ENCODE measurements at regions of chr12 and their contacts with region 1.

Region 1: DNA sequence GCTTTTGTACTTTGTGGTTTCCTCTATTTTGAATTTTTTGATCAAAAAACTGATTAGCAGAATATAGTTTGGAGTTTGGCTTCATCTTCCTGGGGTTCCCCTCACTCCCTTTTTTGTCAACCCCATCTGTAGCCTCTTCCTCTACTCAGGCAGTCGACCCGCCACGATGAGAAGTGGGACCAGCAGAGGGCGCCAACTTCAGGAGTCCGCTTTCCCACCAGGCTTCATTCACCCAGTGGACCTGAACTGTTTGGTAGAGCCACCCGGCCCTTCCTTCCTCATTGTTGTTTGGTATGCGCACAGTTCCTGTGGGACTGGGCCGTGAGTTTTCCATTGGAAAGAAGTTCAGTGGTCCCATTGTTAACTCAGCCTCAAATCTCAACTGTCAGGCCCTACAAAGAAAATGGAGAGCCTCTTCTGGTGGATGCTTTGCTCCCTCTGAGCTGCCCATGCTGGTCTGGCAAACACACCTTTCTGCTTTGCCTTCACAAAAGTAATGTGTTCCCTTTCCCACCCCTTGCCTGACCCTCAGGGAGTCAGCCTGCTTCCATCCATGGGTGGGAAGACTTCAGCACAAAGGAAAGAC is 21.7 kb downstream of the TMBIM6 start:
- DNase-seq: peak; percentile 89
- ATAC-seq: peak; percentile 56
- H3K4me3 Mint-ChIP-seq: peak overlapping the region; percentile 18
- H3K27ac Mint-ChIP-seq: peak overlapping the region; percentile 86
- H3K4me1 Mint-ChIP-seq: peaks cover 68% of the 10 kb centered on the region
- H3K27me3 Mint-ChIP-seq: no peaks in the 10 kb centered on the region
- CTCF ChIP-seq: peak; percentile 85

Region 2: GRCh38 chr12:49740930-49741881 is 21.9 kb before region 1 on chr12 and contains the start of gene TMBIM6:
- CTCF ChIA-PET with region 1: interaction called, 104 read pairs
- POLR2A ChIA-PET with region 1: interaction called, 74 read pairs
- intact Hi-C with region 1: loop called (anchors 2 kb)
- DNase-seq: peak; percentile 100
- ATAC-seq: peak; percentile 91
- H3K4me3 Mint-ChIP-seq: peak within 1 kb of the TSS; percentile 99
- H3K27ac Mint-ChIP-seq: peak within 1 kb of the TSS; percentile 95
- H3K4me1 Mint-ChIP-seq: peaks cover 31% of the 10 kb centered on the region
- H3K27me3 Mint-ChIP-seq: no peaks in the 10 kb centered on the region
- CTCF ChIP-seq: peak; percentile 95
- total RNA-seq, gene TMBIM6: 437 to 443 TPM

Region 3: DNA sequence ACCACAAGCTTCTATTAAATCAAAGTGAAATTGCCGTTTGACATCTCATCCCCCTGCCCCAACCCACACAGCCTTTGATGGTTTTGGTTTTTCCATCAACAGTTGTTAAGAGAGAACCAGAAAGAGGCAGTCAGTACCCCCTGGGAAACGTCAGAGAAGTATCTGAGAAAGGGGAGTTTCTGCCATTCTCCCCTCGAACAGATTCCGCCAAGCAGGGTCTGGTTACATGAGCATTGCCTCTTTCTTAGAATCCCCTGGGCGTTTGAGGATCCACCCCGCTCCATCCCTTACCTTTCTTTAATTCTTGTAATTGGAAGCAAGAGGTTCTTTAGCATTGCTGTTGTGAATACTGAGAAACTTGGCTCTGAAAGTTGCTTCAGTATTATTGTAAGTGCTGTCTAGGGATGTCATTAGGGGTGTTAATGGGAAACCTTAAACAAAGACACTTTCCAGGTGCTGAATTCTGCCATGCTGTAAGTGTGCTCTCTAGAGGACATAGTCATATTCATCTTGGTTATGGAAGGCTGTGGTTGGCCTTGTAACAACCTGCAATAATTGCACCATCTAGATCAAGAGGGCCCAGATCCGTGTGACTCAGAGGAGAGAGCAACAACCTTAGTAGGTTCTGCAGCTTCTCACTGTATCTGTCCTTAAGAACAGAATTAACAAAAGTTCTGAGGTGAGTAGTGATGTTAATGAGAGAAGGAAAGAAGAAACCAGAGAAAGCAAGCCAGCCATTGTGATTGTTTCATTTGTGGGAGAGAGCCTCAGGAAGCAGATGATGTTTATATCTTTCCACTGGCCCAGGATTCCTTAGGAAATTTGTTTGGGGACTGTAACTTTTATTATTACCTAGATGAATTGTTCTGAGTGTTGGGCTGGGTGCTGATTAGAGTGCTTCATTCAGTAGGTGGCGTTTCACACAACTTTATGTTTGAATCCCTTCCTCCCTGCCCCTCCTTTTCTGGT is 12.8 kb before region 1 on chr12:
- CTCF ChIA-PET with region 1: interaction called, 104 read pairs
- POLR2A ChIA-PET with region 1: interaction called, 74 read pairs
- intact Hi-C with region 1: loop called (anchors 2 kb)
- DNase-seq: peak; percentile 85
- ATAC-seq: peak; percentile 84
- H3K4me3 Mint-ChIP-seq: peak overlapping the region; percentile 77
- H3K27ac Mint-ChIP-seq: peak overlapping the region; percentile 96
- H3K4me1 Mint-ChIP-seq: peaks cover 84% of the 10 kb centered on the region
- H3K27me3 Mint-ChIP-seq: no peaks in the 10 kb centered on the region
- CTCF ChIP-seq: no peak

Region 4: DNA sequence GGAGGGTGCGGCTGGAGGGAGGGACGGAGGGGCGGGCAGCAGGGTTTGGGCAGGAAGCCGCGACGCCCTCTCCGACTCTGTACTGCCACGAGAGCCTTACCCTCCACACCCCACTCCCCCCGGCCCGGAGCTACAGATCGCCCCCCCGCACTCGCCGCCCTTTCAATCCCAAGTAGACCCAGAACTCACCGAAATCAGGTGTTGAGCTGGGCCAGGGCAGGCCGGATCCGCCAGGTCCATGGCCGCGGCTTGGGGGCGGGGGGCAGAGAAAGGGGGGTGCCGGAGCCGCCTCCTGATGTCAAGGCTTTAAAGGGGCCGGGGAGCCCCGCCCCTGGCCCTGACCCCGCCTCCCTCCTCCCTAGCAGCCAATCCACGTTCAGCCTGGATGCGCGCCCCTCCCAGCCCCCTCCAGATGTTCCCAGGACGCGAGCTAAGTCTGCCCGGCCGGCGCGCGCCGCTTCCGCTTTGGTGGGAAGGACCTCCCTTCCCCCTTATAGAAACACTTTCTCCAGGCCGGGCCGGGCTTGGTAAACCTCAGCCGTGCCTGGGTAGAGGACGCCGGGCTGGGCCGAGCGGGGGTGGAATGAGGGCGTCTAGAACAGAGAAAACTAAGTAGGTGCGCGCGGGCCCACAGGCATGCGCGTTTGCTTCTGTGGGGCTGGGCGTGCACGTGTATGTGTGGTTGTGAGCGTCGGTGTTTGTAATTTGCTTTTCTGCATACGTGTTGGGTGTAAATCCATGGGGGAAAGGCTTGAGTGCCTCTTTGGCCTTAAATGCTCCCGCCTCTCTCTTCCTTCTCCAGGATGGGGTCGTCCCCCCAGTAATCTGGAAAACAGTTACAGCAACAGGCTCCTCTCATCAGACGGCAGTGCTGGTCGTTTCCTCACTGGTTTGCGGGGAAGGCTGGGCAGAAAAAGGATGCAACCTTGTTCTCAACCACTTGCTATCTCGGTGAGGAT is 65.3 kb after region 1 on chr12 and contains the start of gene NCKAP5L:
- CTCF ChIA-PET with region 1: interaction called, 19 read pairs
- POLR2A ChIA-PET with region 1: interaction called, 3 read pairs
- intact Hi-C with region 1: no loop called
- DNase-seq: peak; percentile 97
- ATAC-seq: peak; percentile 99
- H3K4me3 Mint-ChIP-seq: peak within 1 kb of the TSS; percentile 90
- H3K27ac Mint-ChIP-seq: peak within 1 kb of the TSS; percentile 92
- H3K4me1 Mint-ChIP-seq: peaks cover 25% of the 10 kb centered on the region
- H3K27me3 Mint-ChIP-seq: no peaks in the 10 kb centered on the region
- CTCF ChIP-seq: no peak
- total RNA-seq, gene NCKAP5L: 5.5 to 5.7 TPM

Region 5: DNA sequence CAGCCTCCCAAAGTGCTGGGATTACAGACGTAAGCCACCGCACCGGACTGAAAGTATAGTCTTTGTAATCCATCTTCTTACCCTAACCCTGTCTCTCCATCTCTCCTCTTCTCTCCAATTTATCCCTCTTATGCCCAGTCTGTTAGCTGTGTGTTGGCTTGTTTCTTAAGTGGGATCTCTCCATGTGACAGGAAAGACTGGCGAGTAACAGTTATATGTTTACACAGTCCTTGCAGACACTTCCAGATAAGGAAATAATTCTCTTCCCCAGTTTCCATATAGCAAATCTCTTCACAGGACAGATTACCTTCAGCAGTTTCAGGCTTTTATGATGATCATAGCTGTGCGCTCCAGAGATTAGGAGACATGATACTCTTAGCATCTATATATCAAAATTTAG is 725.7 kb after region 1 on chr12:
- CTCF ChIA-PET with region 1: no interaction called
- POLR2A ChIA-PET with region 1: no interaction called
- intact Hi-C with region 1: no loop called
- DNase-seq: no peak
- ATAC-seq: no peak
- H3K4me3 Mint-ChIP-seq: no peak overlapping the region
- H3K27ac Mint-ChIP-seq: no peak overlapping the region
- H3K4me1 Mint-ChIP-seq: no peaks in the 10 kb centered on the region
- H3K27me3 Mint-ChIP-seq: no peaks in the 10 kb centered on the region
- CTCF ChIP-seq: no peak

Measured in activated CD8-positive, alpha-beta T cell treated with anti-CD3 and anti-CD28 coated beads for 36 hours (primary cell).